HepG2 (cell line): ENCODE measurements at regions of chr17 and their contacts with region 1.

Region 1: DNA sequence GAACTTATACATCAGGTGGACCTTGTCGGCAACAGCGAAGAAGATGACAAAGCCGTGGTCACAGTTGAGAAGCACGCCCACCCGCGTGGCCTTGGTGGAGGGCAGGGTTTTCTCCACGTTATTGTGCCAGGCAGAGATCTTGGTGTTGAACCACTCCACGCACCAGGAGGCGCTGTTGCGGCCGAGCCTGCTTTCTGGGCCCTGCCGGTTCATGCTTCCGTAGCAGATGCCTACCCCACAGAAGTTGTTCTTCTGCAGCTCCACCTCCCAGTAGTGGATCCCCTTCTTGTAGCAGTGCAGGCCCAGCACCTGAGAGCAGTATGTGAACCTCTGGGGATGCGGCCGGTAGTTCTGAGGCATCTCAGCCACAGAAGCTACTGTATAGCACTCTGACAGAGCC is 22.1 kb downstream of the TRIM25 start:
- DNase-seq: no peak
- ATAC-seq: peak; percentile 50
- H3K4me3 ChIP-seq: no peak overlapping the region
- H3K27ac ChIP-seq: no peak overlapping the region
- H3K4me1 ChIP-seq: peaks cover 21% of the 10 kb centered on the region
- H3K27me3 ChIP-seq: no peaks in the 10 kb centered on the region
- CTCF ChIP-seq: peak; percentile 60
- EP300 ChIP-seq: no peak
- POLR2A ChIP-seq: no peak
- RAD21 ChIP-seq: no peak

Region 2: GRCh38 chr17:56939901-56940343 is 48.1 kb after region 1 on chr17:
- CTCF ChIA-PET with region 1: interaction called, 12 read pairs
- POLR2A ChIA-PET with region 1: interaction called, 3 read pairs
- in situ Hi-C with region 1: no loop called
- intact Hi-C with region 1: loop called (anchors 10 kb)
- DNase-seq: peak; percentile 72
- ATAC-seq: peak; percentile 90
- H3K4me3 ChIP-seq: no peak overlapping the region
- H3K27ac ChIP-seq: no peak overlapping the region
- H3K4me1 ChIP-seq: peaks cover 19% of the 10 kb centered on the region
- H3K27me3 ChIP-seq: no peaks in the 10 kb centered on the region
- CTCF ChIP-seq: peak; percentile 89
- EP300 ChIP-seq: no peak
- POLR2A ChIP-seq: no peak
- RAD21 ChIP-seq: peak; percentile 80